Activated naive CD4-positive, alpha-beta T cell treated with anti-CD3 and anti-CD28 coated beads for 36 hours (primary cell): ENCODE measurements at regions of chr5 and their contacts with region 1.

Region 1: GRCh38 chr5:132064738-132065331 is 4.4 kb downstream of the IL3 start:
- DNase-seq: peak; percentile 91
- H3K4me3 Mint-ChIP-seq: no peak overlapping the region
- H3K27ac Mint-ChIP-seq: no peak overlapping the region
- H3K4me1 Mint-ChIP-seq: peaks cover 13% of the 10 kb centered on the region
- H3K27me3 Mint-ChIP-seq: no peaks in the 10 kb centered on the region

Region 2: DNA sequence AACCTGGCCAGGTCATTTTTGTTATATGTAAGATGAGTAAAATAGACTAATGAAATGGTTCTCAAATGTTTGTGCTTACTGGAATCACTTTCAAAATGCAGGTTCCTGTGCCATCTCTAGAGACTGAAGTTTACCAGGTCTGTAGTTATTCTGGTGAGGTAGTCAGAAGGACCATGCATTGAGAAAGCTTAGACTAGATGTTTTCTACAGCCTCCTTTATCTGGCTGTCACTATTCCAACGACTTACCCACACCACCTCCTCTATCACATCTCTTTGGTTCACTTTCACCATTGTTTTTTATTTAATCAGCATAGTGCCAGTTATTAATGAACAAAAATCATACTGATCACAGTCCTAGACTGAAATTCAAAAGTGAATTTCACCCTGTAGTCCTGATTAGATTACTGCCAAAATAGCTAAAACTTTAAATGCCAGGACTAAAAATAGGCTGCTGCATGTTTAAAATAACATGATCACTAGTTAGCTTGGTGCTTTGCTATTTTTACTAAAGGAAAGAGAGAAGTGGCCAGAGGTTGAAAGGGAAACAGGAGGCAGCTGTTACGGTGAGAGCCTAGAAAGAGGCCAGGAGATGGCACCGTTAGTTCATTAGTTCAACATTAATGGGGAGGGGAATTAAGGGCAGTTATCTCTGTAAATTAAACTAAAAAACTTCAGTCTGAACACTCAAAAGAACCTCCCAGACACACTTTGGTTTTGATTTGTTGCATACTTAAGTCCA is 254.2 kb before region 1 on chr5:
- CTCF ChIA-PET with region 1: interaction called, 12 read pairs
- intact Hi-C with region 1: loop called (anchors 1 kb)
- DNase-seq: peak; percentile 31
- H3K4me3 Mint-ChIP-seq: no peak overlapping the region
- H3K27ac Mint-ChIP-seq: no peak overlapping the region
- H3K4me1 Mint-ChIP-seq: no peaks in the 10 kb centered on the region
- H3K27me3 Mint-ChIP-seq: no peaks in the 10 kb centered on the region

Region 3: GRCh38 chr5:131906668-131907067 is 158.2 kb before region 1 on chr5:
- CTCF ChIA-PET with region 1: no interaction called
- intact Hi-C with region 1: no loop called
- DNase-seq: no peak
- H3K4me3 Mint-ChIP-seq: no peak overlapping the region
- H3K27ac Mint-ChIP-seq: peak overlapping the region; percentile 51
- H3K4me1 Mint-ChIP-seq: peaks cover 26% of the 10 kb centered on the region
- H3K27me3 Mint-ChIP-seq: no peaks in the 10 kb centered on the region

Region 4: GRCh38 chr5:131974956-131975726 is 89.7 kb before region 1 on chr5:
- CTCF ChIA-PET with region 1: no interaction called
- intact Hi-C with region 1: no loop called
- DNase-seq: peak; percentile 53
- H3K4me3 Mint-ChIP-seq: peak overlapping the region; percentile 49
- H3K27ac Mint-ChIP-seq: peak overlapping the region; percentile 70
- H3K4me1 Mint-ChIP-seq: peaks cover 46% of the 10 kb centered on the region
- H3K27me3 Mint-ChIP-seq: no peaks in the 10 kb centered on the region

Region 5: DNA sequence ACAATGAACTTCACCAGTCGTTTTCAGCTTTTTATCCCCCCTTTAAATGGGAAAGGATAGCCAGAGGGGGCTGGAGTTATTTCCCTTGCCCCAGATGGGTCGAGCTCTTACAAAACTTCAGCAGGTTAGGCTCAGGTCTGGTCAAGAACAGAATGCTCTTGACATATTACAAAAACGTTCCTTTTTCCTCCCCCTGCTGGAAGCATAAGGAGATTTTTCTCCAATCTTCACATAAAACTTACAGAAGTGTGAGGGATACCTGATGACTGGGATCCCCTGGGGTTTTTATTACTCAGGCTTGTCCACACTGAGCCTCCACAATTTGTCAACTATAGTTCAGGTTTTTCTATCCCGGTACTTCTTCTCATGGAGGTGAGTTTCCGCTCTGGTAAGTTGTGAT is 69.5 kb after region 1 on chr5:
- CTCF ChIA-PET with region 1: interaction called, 7 read pairs
- intact Hi-C with region 1: loop called (anchors 1 kb)
- DNase-seq: no peak
- H3K4me3 Mint-ChIP-seq: no peak overlapping the region
- H3K27ac Mint-ChIP-seq: no peak overlapping the region
- H3K4me1 Mint-ChIP-seq: no peaks in the 10 kb centered on the region
- H3K27me3 Mint-ChIP-seq: peaks cover 27% of the 10 kb centered on the region

Region 6: DNA sequence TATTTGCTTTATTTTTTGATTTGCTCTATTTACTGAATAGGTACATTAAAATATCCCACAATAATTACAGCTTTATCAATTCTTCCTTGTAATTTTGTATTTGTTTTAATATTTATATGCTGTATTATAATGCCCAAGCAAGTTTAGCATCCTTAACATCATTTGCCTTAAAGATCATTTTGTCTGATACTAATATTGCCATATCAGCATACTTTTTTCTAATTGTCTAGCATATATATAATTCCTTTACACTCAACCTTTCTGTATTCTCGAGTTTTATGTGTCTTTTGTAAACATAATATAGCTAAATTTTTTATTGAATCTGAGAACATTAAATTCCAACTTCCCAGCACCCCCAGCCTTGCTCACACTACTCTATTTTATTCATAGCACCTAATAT is 98.1 kb after region 1 on chr5:
- CTCF ChIA-PET with region 1: no interaction called
- intact Hi-C with region 1: no loop called
- DNase-seq: no peak
- H3K4me3 Mint-ChIP-seq: no peak overlapping the region
- H3K27ac Mint-ChIP-seq: no peak overlapping the region
- H3K4me1 Mint-ChIP-seq: no peaks in the 10 kb centered on the region
- H3K27me3 Mint-ChIP-seq: peaks cover 3% of the 10 kb centered on the region

Region 7: GRCh38 chr5:132238169-132238744 is 173.4 kb after region 1 on chr5:
- CTCF ChIA-PET with region 1: interaction called, 22 read pairs
- intact Hi-C with region 1: loop called (anchors 1 kb)
- DNase-seq: peak; percentile 89
- H3K4me3 Mint-ChIP-seq: no peak overlapping the region
- H3K27ac Mint-ChIP-seq: no peak overlapping the region
- H3K4me1 Mint-ChIP-seq: no peaks in the 10 kb centered on the region
- H3K27me3 Mint-ChIP-seq: peaks cover 5% of the 10 kb centered on the region

Region 8: DNA sequence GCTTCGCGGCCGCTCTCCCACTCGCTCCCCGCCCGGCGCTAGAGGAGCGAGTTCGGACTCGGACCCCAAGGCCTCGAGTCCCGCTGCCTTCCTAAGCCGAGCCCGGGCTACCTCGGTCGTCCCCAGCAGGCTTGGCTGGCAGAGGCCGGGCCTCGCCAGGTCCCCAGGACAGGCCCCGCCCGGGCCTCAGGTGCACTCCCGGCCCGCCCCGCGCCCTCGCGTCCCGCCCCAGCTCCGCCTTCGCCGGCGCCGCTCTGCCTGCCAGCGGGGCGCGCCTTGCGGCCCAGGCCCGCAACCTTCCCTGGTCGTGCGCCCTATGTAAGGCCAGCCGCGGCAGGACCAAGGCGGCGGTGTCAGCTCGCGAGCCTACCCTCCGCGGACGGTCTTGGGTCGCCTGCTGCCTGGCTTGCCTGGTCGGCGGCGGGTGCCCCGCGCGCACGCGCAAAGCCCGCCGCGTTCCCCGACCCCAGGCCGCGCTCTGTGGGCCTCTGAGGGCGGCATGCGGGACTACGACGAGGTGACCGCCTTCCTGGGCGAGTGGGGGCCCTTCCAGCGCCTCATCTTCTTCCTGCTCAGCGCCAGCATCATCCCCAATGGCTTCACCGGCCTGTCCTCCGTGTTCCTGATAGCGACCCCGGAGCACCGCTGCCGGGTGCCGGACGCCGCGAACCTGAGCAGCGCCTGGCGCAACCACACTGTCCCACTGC is 304.8 kb after region 1 on chr5 and contains the start of gene SLC22A5:
- CTCF ChIA-PET with region 1: no interaction called
- intact Hi-C with region 1: loop called (anchors 5 kb)
- DNase-seq: peak; percentile 72
- H3K4me3 Mint-ChIP-seq: peak within 1 kb of the TSS; percentile 77
- H3K27ac Mint-ChIP-seq: peak within 1 kb of the TSS; percentile 68
- H3K4me1 Mint-ChIP-seq: peaks cover 22% of the 10 kb centered on the region
- H3K27me3 Mint-ChIP-seq: no peaks in the 10 kb centered on the region
- total RNA-seq, gene SLC22A5: 3.1 to 3.6 TPM